CD4-positive, alpha-beta T cell (primary cell): ENCODE measurements at regions of chr14 and their contacts with region 1.

Region 1: DNA sequence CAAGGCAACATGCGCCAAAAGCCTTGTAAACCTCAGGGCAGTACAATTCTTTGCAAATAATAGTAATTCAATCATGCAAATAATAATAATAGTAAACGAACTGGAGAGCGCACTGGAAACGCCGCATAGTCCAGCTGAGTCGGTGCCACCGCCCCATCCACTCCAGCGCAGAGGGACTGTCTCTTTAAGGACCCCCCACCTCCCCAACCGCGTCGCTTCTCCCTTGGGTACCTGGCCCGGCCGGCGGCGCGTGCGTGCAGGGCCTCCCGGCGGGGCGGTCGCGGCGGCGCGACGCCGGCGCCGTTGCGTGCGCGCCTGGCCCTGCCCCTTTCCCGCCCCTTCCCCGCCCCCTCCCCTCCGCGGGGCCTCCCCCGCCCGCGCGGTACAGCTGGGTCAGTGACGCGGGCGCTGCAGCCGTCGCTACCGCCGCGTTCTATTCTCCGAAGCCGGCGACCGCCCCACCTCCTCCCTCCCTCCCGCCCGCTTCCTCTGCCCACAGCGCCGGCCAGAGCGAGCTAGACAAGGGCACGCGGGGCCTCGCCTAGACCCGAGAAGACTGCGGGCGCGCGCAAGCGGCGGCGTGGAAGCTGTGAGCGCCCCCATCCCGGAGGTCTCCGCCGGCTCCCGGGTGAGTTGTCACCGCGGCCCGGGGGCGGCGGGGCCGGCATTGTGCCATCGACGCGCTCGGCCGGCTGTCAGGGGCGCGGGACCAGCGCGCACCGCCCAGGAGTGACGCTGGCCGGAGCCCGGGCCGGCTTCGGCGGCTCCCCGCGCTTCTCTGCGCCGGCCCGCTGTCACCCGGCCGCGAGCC is at the start of gene SUSD6:
- DNase-seq: peak; percentile 78 to 96 (median 86)
- ATAC-seq: peak; percentile 78
- H3K4me3 ChIP-seq: peak within 1 kb of the TSS; percentile 91
- H3K4me3 Mint-ChIP-seq: peak within 1 kb of the TSS; percentile 90
- H3K27ac ChIP-seq: peak within 1 kb of the TSS; percentile 74 to 92
- H3K27ac Mint-ChIP-seq: peak within 1 kb of the TSS; percentile 94
- H3K4me1 ChIP-seq: peaks cover 61% of the 10 kb centered on the region
- H3K4me1 Mint-ChIP-seq: peaks cover 59% of the 10 kb centered on the region
- H3K27me3 ChIP-seq: no peaks in the 10 kb centered on the region
- H3K27me3 Mint-ChIP-seq: no peaks in the 10 kb centered on the region
- CTCF ChIP-seq: no peak
- total RNA-seq, gene SUSD6: 93.7 to 95.1 TPM

Region 2: GRCh38 chr14:69625299-69626131 is 14.1 kb after region 1 on chr14:
- CTCF ChIA-PET with region 1: interaction called, 6 read pairs
- POLR2A ChIA-PET with region 1: interaction called, 28 read pairs
- intact Hi-C with region 1: loop called in 1 of 2 experiments (anchors 1 kb)
- DNase-seq: peak; percentile 48 to 86 (median 60)
- ATAC-seq: peak; percentile 90
- H3K4me3 ChIP-seq: peak overlapping the region; percentile 42
- H3K4me3 Mint-ChIP-seq: peak overlapping the region; percentile 79
- H3K27ac ChIP-seq: peak overlapping the region; percentile 46 to 80
- H3K27ac Mint-ChIP-seq: peak overlapping the region; percentile 85
- H3K4me1 ChIP-seq: peaks cover 93% of the 10 kb centered on the region
- H3K4me1 Mint-ChIP-seq: peaks cover 93% of the 10 kb centered on the region
- H3K27me3 ChIP-seq: no peaks in the 10 kb centered on the region
- H3K27me3 Mint-ChIP-seq: no peaks in the 10 kb centered on the region
- CTCF ChIP-seq: no peak

Region 3: GRCh38 chr14:69648477-69649451 is 37.4 kb after region 1 on chr14:
- CTCF ChIA-PET with region 1: no interaction called
- POLR2A ChIA-PET with region 1: interaction called, 4 read pairs
- intact Hi-C with region 1: loop called in 1 of 2 experiments (anchors 5 kb)
- DNase-seq: no peak
- ATAC-seq: no peak
- H3K4me3 ChIP-seq: no peak overlapping the region
- H3K4me3 Mint-ChIP-seq: no peak overlapping the region
- H3K27ac ChIP-seq: no peak overlapping the region
- H3K27ac Mint-ChIP-seq: peak overlapping the region; percentile 10
- H3K4me1 ChIP-seq: peaks cover 57% of the 10 kb centered on the region
- H3K4me1 Mint-ChIP-seq: peaks cover 86% of the 10 kb centered on the region
- H3K27me3 ChIP-seq: no peaks in the 10 kb centered on the region
- H3K27me3 Mint-ChIP-seq: no peaks in the 10 kb centered on the region
- CTCF ChIP-seq: no peak

Region 4: GRCh38 chr14:69708586-69709174 is 97.3 kb after region 1 on chr14:
- CTCF ChIA-PET with region 1: interaction called, 3 read pairs
- POLR2A ChIA-PET with region 1: interaction called, 3 read pairs
- intact Hi-C with region 1: loop called in 1 of 2 experiments (anchors 5 kb)
- DNase-seq: peak in 8 of 14 experiments; percentile 20 to 52 (median 27)
- ATAC-seq: peak; percentile 72
- H3K4me3 ChIP-seq: no peak overlapping the region
- H3K4me3 Mint-ChIP-seq: no peak overlapping the region
- H3K27ac ChIP-seq: no peak overlapping the region
- H3K27ac Mint-ChIP-seq: peak overlapping the region; percentile 27
- H3K4me1 ChIP-seq: peaks cover 34% of the 10 kb centered on the region
- H3K4me1 Mint-ChIP-seq: peaks cover 35% of the 10 kb centered on the region
- H3K27me3 ChIP-seq: no peaks in the 10 kb centered on the region
- H3K27me3 Mint-ChIP-seq: no peaks in the 10 kb centered on the region
- CTCF ChIP-seq: peak; percentile 23

Region 5: GRCh38 chr14:70640938-70641547 is 1029.6 kb after region 1 on chr14:
- CTCF ChIA-PET with region 1: no interaction called
- POLR2A ChIA-PET with region 1: no interaction called
- intact Hi-C with region 1: loop called in 1 of 2 experiments (anchors 10 kb)
- DNase-seq: peak in 13 of 14 experiments; percentile 29 to 79 (median 57)
- ATAC-seq: peak; percentile 69
- H3K4me3 ChIP-seq: peak overlapping the region; percentile 57
- H3K4me3 Mint-ChIP-seq: peak overlapping the region; percentile 98
- H3K27ac ChIP-seq: peak overlapping the region; percentile 32 to 71
- H3K27ac Mint-ChIP-seq: peak overlapping the region; percentile 98
- H3K4me1 ChIP-seq: peaks cover 39% of the 10 kb centered on the region
- H3K4me1 Mint-ChIP-seq: peaks cover 58% of the 10 kb centered on the region
- H3K27me3 ChIP-seq: no peaks in the 10 kb centered on the region
- H3K27me3 Mint-ChIP-seq: no peaks in the 10 kb centered on the region
- CTCF ChIP-seq: no peak